GM10248 (cell line): ENCODE measurements at regions of chr4 and their contacts with region 1.

Region 1: GRCh38 chr4:67746797-67747495 is 7.2 kb downstream of the GNRHR start:
- DNase-seq: peak; percentile 20
- CTCF ChIP-seq: peak; percentile 42

Region 2: GRCh38 chr4:67355801-67356200 is 391.1 kb before region 1 on chr4:
- CTCF ChIA-PET with region 1: no interaction called
- POLR2A ChIA-PET with region 1: no interaction called
- DNase-seq: no peak
- CTCF ChIP-seq: no peak

Region 3: GRCh38 chr4:67401902-67402301 is 345.0 kb before region 1 on chr4:
- CTCF ChIA-PET with region 1: no interaction called
- POLR2A ChIA-PET with region 1: no interaction called
- DNase-seq: no peak
- CTCF ChIP-seq: no peak

Region 4: DNA sequence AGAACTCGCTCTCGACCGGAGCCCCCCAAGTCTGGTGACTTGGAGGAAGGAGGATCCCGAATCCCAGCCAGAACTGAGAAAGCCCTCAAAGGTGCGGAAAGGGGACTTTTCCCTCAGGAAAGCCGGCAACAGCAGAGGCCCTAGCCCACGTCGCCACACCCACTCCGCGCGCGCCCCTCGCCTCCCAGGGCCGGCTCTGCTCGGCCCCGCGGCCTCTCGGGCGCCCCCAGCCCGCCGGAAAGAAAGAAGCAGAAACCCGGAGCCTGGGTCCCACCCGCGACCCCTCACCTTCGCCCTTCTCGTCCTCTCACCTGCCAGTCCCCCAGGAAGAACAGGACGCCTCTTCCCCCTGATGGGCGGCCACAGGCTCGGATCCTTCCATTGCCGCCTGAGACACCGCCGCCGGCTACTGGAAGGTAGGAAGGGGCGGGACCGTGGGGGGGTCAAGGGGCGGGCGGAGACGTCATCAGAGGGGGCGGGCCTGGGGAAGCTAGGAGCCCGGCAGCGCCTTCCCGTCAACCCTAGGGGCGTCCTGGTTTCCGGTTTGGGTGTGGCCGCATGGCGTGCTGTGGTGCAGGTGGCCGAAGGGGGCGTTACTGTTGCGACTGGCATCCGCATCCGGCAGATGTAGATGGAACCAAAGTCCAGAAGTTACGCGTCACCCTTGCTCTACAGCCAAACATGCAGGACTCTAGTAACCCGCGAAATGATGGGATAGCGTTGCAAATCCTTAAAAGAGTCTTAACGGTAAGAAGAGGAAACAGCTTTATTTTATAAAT is 46.0 kb before region 1 on chr4 and contains the start of gene UBA6:
- CTCF ChIA-PET with region 1: interaction called, 11 read pairs
- POLR2A ChIA-PET with region 1: no interaction called
- DNase-seq: peak; percentile 97
- CTCF ChIP-seq: peak; percentile 56

Region 5: GRCh38 chr4:67718848-67719247 is 28.1 kb before region 1 on chr4:
- CTCF ChIA-PET with region 1: interaction called, 10 read pairs
- POLR2A ChIA-PET with region 1: no interaction called
- DNase-seq: no peak
- CTCF ChIP-seq: no peak

Region 6: GRCh38 chr4:67727124-67727850 is 19.7 kb before region 1 on chr4:
- CTCF ChIA-PET with region 1: interaction called, 42 read pairs
- POLR2A ChIA-PET with region 1: no interaction called
- DNase-seq: no peak
- CTCF ChIP-seq: no peak

Region 7: GRCh38 chr4:67736262-67736661 is 10.7 kb before region 1 on chr4:
- CTCF ChIA-PET with region 1: interaction called, 42 read pairs
- POLR2A ChIA-PET with region 1: no interaction called
- DNase-seq: no peak
- CTCF ChIP-seq: no peak

Region 8: DNA sequence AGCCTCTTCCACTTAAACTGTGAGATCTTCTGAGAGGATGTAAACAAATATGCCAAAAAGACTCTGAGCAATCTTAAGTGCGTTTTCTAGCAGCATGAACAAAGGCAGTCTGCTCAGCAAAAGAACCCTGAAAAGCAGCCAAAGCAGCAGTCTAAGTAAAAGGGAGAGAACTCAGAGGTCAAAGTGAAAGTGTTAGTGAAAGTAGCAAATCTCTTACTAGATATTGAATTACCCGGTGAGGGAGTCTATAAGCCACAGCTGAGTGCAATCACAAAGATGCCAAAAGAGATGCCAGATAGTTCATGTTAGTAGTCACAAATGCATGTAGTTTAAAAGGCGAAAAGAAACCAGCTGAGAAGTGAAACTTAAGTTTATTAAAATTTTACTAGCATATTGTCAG is 15.1 kb after region 1 on chr4:
- CTCF ChIA-PET with region 1: interaction called, 26 read pairs
- POLR2A ChIA-PET with region 1: no interaction called
- DNase-seq: peak; percentile 46
- CTCF ChIP-seq: no peak